ENCODE measurements at regions of chr3 and their contacts with region 1.

Region 1: GRCh38 chr3:141192345-141192744 is 39.3 kb upstream of the PXYLP1 start:
- DNase-seq: peak; percentile 92 to 100 (median 99)
- ATAC-seq: peak; percentile 100
- H3K4me3 ChIP-seq: no peak overlapping the region
- H3K4me1 ChIP-seq: peaks cover 4% of the 10 kb centered on the region
- CTCF ChIP-seq: peak; percentile 97

Region 2: GRCh38 chr3:140906785-140907184 is 285.6 kb before region 1 on chr3:
- intact Hi-C with region 1: loop called in 1 of 2 experiments (anchors 10 kb)
- DNase-seq: no peak
- ATAC-seq: no peak
- H3K4me3 ChIP-seq: no peak overlapping the region
- H3K4me1 ChIP-seq: no peaks in the 10 kb centered on the region
- CTCF ChIP-seq: no peak

Region 3: GRCh38 chr3:141011232-141011996 is 180.9 kb before region 1 on chr3:
- intact Hi-C with region 1: loop called (anchors 10 kb)
- DNase-seq: peak; percentile 62 to 78 (median 75)
- ATAC-seq: peak; percentile 70
- H3K4me3 ChIP-seq: no peak overlapping the region
- H3K4me1 ChIP-seq: no peaks in the 10 kb centered on the region
- CTCF ChIP-seq: peak; percentile 37

Region 4: DNA sequence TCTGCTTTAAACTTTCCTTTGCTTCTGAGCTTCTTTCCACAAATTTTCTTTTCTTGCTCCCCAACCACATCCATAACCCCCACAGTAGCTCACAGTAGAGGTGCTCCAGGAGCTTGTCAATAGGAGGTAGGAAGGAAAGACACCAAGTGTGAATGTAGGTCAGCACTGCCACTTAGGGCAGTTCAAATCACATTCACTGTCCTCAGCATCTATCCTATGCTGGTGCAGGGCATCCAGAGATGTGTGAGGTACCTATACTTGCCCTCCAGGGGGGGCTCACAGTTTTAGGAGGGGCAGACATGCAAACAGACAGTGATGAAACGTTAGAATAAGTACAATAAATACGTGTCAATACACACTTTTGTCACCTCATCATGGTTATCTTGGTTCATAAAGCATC is 142.7 kb before region 1 on chr3:
- intact Hi-C with region 1: no loop called
- DNase-seq: no peak
- ATAC-seq: no peak
- H3K4me3 ChIP-seq: no peak overlapping the region
- H3K4me1 ChIP-seq: peaks cover 4% of the 10 kb centered on the region
- CTCF ChIP-seq: no peak

Region 5: DNA sequence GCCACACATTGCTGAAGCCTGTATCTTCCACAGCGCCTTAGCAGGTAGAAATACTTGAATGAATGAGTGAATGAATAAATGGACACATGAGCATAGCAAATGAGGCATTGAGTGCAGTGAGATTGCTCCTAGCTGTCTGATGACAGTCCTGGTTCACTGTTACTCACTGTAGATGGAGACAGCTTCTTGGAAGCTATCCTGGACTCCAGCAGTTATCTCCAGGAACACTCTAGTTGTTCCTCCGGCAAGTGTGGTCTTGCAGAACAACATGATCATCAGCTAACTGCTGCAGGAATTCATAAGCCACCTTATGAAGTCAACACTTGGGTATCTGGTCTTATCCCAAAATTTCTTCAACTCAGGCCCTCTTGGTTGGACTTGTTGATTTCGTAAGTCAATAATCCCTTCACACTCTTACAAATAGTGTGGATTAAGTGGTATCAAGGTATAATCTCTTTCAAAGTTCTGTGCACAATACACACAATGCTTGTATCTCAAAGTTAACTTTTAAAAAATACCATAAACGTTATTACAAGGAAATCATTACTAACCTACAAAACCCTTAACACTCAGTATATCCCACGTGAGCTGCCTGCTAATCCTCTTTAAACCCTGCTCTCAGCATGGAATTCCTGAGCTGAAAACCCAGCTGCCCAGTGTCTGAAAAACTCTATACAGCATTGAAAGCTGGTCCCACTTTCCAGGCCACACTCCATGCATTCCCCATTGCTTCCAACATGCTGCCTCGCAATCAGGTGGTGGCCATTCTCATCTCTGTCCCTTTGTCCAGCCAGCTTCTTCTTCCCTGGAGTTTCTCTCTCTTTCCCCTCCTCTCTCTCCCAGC is 161.5 kb after region 1 on chr3:
- intact Hi-C with region 1: no loop called
- DNase-seq: no peak
- ATAC-seq: no peak
- H3K4me3 ChIP-seq: no peak overlapping the region
- H3K4me1 ChIP-seq: no peaks in the 10 kb centered on the region
- CTCF ChIP-seq: no peak

Region 6: GRCh38 chr3:141386611-141387111 is 194.3 kb after region 1 on chr3:
- intact Hi-C with region 1: no loop called
- DNase-seq: no peak
- ATAC-seq: peak; percentile 39
- H3K4me3 ChIP-seq: no peak overlapping the region
- H3K4me1 ChIP-seq: no peaks in the 10 kb centered on the region
- CTCF ChIP-seq: no peak

Measured in mucosa of descending colon (tissue), 3 donors.